GM12878 (cell line): ENCODE measurements at regions of chr20 and their contacts with region 1.

Region 1: DNA sequence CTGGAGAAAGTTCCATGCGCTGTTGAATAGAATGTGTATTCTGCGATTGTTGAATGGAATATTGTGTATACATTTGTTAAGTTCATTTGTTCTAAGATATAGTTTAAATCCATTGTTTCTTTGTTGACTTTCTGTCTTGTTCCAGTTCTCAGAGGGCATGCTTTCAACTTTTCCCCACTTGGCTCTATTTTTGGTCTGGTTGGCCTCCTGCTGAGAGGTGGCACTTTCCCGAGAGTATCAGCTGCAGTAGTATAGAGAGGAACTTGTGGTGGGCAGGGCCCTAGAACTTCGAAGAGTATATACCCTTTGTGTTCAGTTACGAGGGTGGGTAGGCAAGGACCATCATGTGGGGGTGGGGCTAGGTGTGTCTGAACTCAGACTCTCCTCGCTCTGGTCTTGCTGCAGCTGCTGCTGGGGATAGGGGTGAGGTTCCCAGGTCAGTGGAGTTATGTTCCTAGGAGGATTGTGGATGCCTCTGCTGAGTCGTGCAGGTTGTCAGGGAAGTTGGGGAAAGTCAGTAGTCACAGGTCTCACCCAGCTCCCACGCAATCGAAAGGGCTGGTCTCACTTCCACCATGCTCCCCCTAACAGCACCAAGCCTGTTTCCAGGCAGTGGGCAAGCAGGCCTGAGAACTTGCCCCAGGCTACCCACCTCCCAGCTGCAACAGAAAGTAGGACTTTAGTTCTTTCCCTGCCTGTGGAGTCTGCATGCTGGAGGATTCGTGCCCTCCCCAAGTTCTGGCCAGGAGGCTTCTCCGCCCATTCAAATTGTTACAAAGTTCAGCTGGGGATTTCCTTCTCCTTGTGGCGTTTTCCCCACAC is 118.9 kb upstream of the SSTR4 start:
- DNase-seq: no peak
- ATAC-seq: peak; percentile 56
- H3K4me3 ChIP-seq: no peak overlapping the region
- H3K27ac ChIP-seq: no peak overlapping the region
- H3K4me1 ChIP-seq: no peaks in the 10 kb centered on the region
- H3K27me3 ChIP-seq: no peaks in the 10 kb centered on the region
- CTCF ChIP-seq: no peak
- EP300 ChIP-seq: no peak
- POLR2A ChIP-seq: no peak
- RAD21 ChIP-seq: no peak

Region 2: GRCh38 chr20:22905658-22906057 is 10.6 kb before region 1 on chr20:
- CTCF ChIA-PET with region 1: interaction called, 10 read pairs
- POLR2A ChIA-PET with region 1: no interaction called
- RAD21 ChIA-PET with region 1: interaction called, 7 read pairs
- SMC1A ChIA-PET with region 1: interaction called, 22 read pairs
- in situ Hi-C with region 1: no loop called
- intact Hi-C with region 1: no loop called
- DNase-seq: no peak
- ATAC-seq: peak; percentile 66
- H3K4me3 ChIP-seq: no peak overlapping the region
- H3K27ac ChIP-seq: no peak overlapping the region
- H3K4me1 ChIP-seq: no peaks in the 10 kb centered on the region
- H3K27me3 ChIP-seq: no peaks in the 10 kb centered on the region
- CTCF ChIP-seq: no peak
- EP300 ChIP-seq: no peak
- POLR2A ChIP-seq: no peak
- RAD21 ChIP-seq: no peak